Natural killer cell (primary cell): ENCODE measurements at regions of chr2 and their contacts with region 1.

Region 1: GRCh38 chr2:191206613-191207481 is 38.4 kb upstream of the MYO1B start:
- DNase-seq: peak; percentile 67 to 78
- ATAC-seq: peak; percentile 80 to 91 (median 88)
- H3K4me3 ChIP-seq: peak overlapping the region; percentile 59
- H3K4me3 Mint-ChIP-seq: peak overlapping the region; percentile 95
- H3K27ac ChIP-seq: peak overlapping the region; percentile 99
- H3K27ac Mint-ChIP-seq: peak overlapping the region; percentile 92 to 93
- H3K4me1 ChIP-seq: peaks cover 48% of the 10 kb centered on the region
- H3K4me1 Mint-ChIP-seq: peaks cover 46 to 51% of the 10 kb centered on the region in 2 donors
- H3K27me3 ChIP-seq: no peaks in the 10 kb centered on the region
- H3K27me3 Mint-ChIP-seq: no peaks in the 10 kb centered on the region
- CTCF ChIP-seq: no peak

Region 2: GRCh38 chr2:190791347-190791975 is 415.4 kb before region 1 on chr2:
- intact Hi-C with region 1: no loop called
- DNase-seq: peak; percentile 11 to 20
- ATAC-seq: peak; percentile 81 to 98 (median 95)
- H3K4me3 ChIP-seq: no peak overlapping the region
- H3K4me3 Mint-ChIP-seq: peak overlapping the region; percentile 4
- H3K27ac ChIP-seq: no peak overlapping the region
- H3K27ac Mint-ChIP-seq: peak overlapping the region in 1 of 2 donors; percentile 29
- H3K4me1 ChIP-seq: peaks cover 3% of the 10 kb centered on the region
- H3K4me1 Mint-ChIP-seq: peaks cover 14 to 19% of the 10 kb centered on the region in 2 donors
- H3K27me3 ChIP-seq: no peaks in the 10 kb centered on the region
- H3K27me3 Mint-ChIP-seq: no peaks in the 10 kb centered on the region
- CTCF ChIP-seq: no peak

Region 3: GRCh38 chr2:191114403-191114886 is 92.4 kb before region 1 on chr2:
- intact Hi-C with region 1: loop called (anchors 1 kb)
- DNase-seq: peak; percentile 62 to 74
- ATAC-seq: peak; percentile 57 to 72 (median 62)
- H3K4me3 ChIP-seq: peak overlapping the region; percentile 17
- H3K4me3 Mint-ChIP-seq: peak overlapping the region; percentile 78
- H3K27ac ChIP-seq: peak overlapping the region; percentile 100
- H3K27ac Mint-ChIP-seq: peak overlapping the region; percentile 95 to 98
- H3K4me1 ChIP-seq: peaks cover 33% of the 10 kb centered on the region
- H3K4me1 Mint-ChIP-seq: peaks cover 76% of the 10 kb centered on the region in 2 donors
- H3K27me3 ChIP-seq: no peaks in the 10 kb centered on the region
- H3K27me3 Mint-ChIP-seq: no peaks in the 10 kb centered on the region
- CTCF ChIP-seq: no peak

Region 4: GRCh38 chr2:191150600-191151330 is 56.1 kb before region 1 on chr2 and contains the start of gene STAT4:
- intact Hi-C with region 1: loop called (anchors 2 kb)
- DNase-seq: peak; percentile 79 to 96
- ATAC-seq: peak; percentile 71 to 90 (median 82)
- H3K4me3 ChIP-seq: peak within 1 kb of the TSS; percentile 63
- H3K4me3 Mint-ChIP-seq: peak within 1 kb of the TSS; percentile 87
- H3K27ac ChIP-seq: peak within 1 kb of the TSS; percentile 92
- H3K27ac Mint-ChIP-seq: peak within 1 kb of the TSS; percentile 95 to 98
- H3K4me1 ChIP-seq: peaks cover 36% of the 10 kb centered on the region
- H3K4me1 Mint-ChIP-seq: peaks cover 79 to 85% of the 10 kb centered on the region in 2 donors
- H3K27me3 ChIP-seq: no peaks in the 10 kb centered on the region
- H3K27me3 Mint-ChIP-seq: no peaks in the 10 kb centered on the region
- CTCF ChIP-seq: no peak
- total RNA-seq, gene STAT4: 264 to 339 (median 304) TPM

Region 5: GRCh38 chr2:191189112-191189635 is 17.7 kb before region 1 on chr2:
- intact Hi-C with region 1: loop called (anchors 1 kb)
- DNase-seq: peak in 1 of 2 donors; percentile 49
- ATAC-seq: no peak
- H3K4me3 ChIP-seq: no peak overlapping the region
- H3K4me3 Mint-ChIP-seq: peak overlapping the region; percentile 2
- H3K27ac ChIP-seq: no peak overlapping the region
- H3K27ac Mint-ChIP-seq: no peak overlapping the region
- H3K4me1 ChIP-seq: peaks cover 10% of the 10 kb centered on the region
- H3K4me1 Mint-ChIP-seq: peaks cover 20 to 22% of the 10 kb centered on the region in 2 donors
- H3K27me3 ChIP-seq: no peaks in the 10 kb centered on the region
- H3K27me3 Mint-ChIP-seq: no peaks in the 10 kb centered on the region
- CTCF ChIP-seq: no peak

Region 6: GRCh38 chr2:191245046-191245868 is 38.4 kb after region 1 on chr2 and contains the start of gene MYO1B:
- intact Hi-C with region 1: no loop called
- DNase-seq: peak; percentile 34 to 63
- ATAC-seq: peak; percentile 69 to 78 (median 74)
- H3K4me3 ChIP-seq: peak within 1 kb of the TSS; percentile 33
- H3K4me3 Mint-ChIP-seq: peak within 1 kb of the TSS; percentile 81
- H3K27ac ChIP-seq: no peak within 1 kb of the TSS
- H3K27ac Mint-ChIP-seq: no peak within 1 kb of the TSS
- H3K4me1 ChIP-seq: peaks cover 3% of the 10 kb centered on the region
- H3K4me1 Mint-ChIP-seq: peaks cover 4 to 11% of the 10 kb centered on the region in 2 donors
- H3K27me3 ChIP-seq: peaks cover 16% of the 10 kb centered on the region
- H3K27me3 Mint-ChIP-seq: peaks cover 36% of the 10 kb centered on the region in 2 donors
- CTCF ChIP-seq: no peak
- total RNA-seq, gene MYO1B: 0.21 to 0.80 (median 0.29) TPM